Colonic mucosa (tissue), 4 donors: ENCODE measurements at regions of chr3 and their contacts with region 1.

Region 1: DNA sequence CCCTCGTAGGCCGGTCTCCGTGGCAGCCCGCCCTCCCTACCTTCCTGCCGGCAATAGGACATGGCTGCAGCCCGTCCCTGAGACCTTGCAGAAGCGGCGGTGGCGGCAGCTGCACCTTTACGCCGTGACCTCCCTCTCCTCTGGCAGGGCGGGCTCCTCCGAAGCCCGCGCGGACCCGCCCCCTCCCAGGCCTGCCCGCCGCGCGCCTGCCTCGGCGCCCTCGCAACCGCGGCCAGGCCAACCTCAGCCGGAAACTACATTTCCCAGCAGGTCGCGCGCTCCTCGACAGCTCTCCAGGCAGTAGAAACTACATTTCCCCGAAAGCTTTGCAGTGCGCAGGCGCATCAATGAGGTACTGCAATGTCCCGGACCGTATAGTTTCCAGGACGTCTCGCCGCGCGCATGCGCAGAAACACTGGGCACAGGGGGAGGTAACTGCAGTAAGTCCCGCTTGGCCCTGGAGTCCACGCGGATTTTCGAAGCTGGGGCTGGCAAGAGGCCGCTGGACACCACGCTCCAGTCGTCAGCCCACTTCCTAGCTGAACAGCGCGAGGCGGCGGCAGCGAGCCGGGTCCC is at the starts of genes CHCHD4 and TMEM43:
- DNase-seq: peak; percentile 100
- H3K4me3 ChIP-seq: peak within 1 kb of the TSS; percentile 80
- H3K27ac ChIP-seq: peak within 1 kb of the TSS; percentile 88
- H3K4me1 ChIP-seq: peaks cover 14% of the 10 kb centered on the region
- H3K27me3 ChIP-seq: no peaks in the 10 kb centered on the region
- CTCF ChIP-seq: no peak
- total RNA-seq, gene CHCHD4: 14.5 to 25.4 TPM
- total RNA-seq, gene TMEM43: 25.4 to 31.1 TPM

Region 2: GRCh38 chr3:14178247-14179113 is 53.8 kb after region 1 on chr3 and contains the starts of genes LSM3 and XPC:
- intact Hi-C with region 1: loop called (anchors 5 kb)
- DNase-seq: peak; percentile 98
- H3K4me3 ChIP-seq: peak within 1 kb of the TSS; percentile 86
- H3K27ac ChIP-seq: peak within 1 kb of the TSS; percentile 93
- H3K4me1 ChIP-seq: peaks cover 20% of the 10 kb centered on the region
- H3K27me3 ChIP-seq: no peaks in the 10 kb centered on the region
- CTCF ChIP-seq: no peak
- total RNA-seq, gene LSM3: 12.4 to 16.4 TPM
- total RNA-seq, gene XPC: 14.7 to 23.3 TPM